CD8-positive, alpha-beta T cell (primary cell): ENCODE measurements at regions of chr1 and their contacts with region 1.

Region 1: GRCh38 chr1:86537928-86538695 is 8.8 kb upstream of the CLCA4 start:
- DNase-seq: no peak
- ATAC-seq: no peak
- H3K4me3 ChIP-seq: no peak overlapping the region
- H3K4me3 Mint-ChIP-seq: no peak overlapping the region
- H3K27ac ChIP-seq: no peak overlapping the region
- H3K27ac Mint-ChIP-seq: no peak overlapping the region
- H3K4me1 ChIP-seq: no peaks in the 10 kb centered on the region
- H3K4me1 Mint-ChIP-seq: no peaks in the 10 kb centered on the region
- H3K27me3 ChIP-seq: no peaks in the 10 kb centered on the region
- H3K27me3 Mint-ChIP-seq: peaks cover 28% of the 10 kb centered on the region
- CTCF ChIP-seq: no peak

Region 2: DNA sequence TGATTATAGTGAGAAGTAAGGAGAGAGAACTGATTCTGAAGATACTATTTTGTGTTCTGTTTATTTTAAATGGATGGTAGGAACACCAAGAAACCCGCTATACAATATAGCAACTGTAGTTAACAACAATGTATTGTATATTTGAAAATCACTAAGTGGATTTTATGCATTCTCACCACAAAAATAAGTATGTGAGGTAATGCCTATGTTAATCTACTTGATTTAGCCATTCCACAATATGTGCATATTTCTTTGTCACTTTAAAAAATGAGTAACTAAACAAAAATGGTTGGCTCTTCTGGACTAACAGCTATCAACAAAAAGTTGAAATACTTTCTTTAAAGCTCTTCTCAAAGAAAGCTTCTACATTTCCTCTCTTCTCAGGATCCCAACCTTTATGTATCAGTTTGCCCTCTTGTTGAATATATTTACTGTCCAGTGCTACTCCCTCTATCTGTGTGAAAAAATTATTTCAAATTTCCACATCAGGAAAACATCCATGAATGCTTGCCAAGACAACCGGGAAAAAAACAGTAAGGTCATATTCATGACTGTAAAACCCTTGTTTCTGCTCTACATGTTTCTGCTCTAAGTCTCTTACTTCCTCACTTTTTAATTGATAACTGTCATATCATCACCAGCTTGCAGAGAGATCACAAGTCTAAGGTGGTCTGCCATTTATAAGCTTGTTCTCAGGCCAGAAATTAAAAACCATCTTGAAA is 35.8 kb after region 1 on chr1:
- CTCF ChIA-PET with region 1: no interaction called
- POLR2A ChIA-PET with region 1: no interaction called
- intact Hi-C with region 1: no loop called
- DNase-seq: no peak
- ATAC-seq: no peak
- H3K4me3 ChIP-seq: no peak overlapping the region
- H3K4me3 Mint-ChIP-seq: no peak overlapping the region
- H3K27ac ChIP-seq: no peak overlapping the region
- H3K27ac Mint-ChIP-seq: no peak overlapping the region
- H3K4me1 ChIP-seq: no peaks in the 10 kb centered on the region
- H3K4me1 Mint-ChIP-seq: no peaks in the 10 kb centered on the region
- H3K27me3 ChIP-seq: peaks cover 0 to 4% of the 10 kb centered on the region in 2 experiments
- H3K27me3 Mint-ChIP-seq: peaks cover 7% of the 10 kb centered on the region
- CTCF ChIP-seq: no peak

Region 3: GRCh38 chr1:87370539-87370938 is 832.4 kb after region 1 on chr1:
- CTCF ChIA-PET with region 1: no interaction called
- POLR2A ChIA-PET with region 1: no interaction called
- intact Hi-C with region 1: loop called in 1 of 2 experiments (anchors 5 kb)
- DNase-seq: no peak
- ATAC-seq: no peak
- H3K4me3 ChIP-seq: no peak overlapping the region
- H3K4me3 Mint-ChIP-seq: no peak overlapping the region
- H3K27ac ChIP-seq: no peak overlapping the region
- H3K27ac Mint-ChIP-seq: no peak overlapping the region
- H3K4me1 ChIP-seq: no peaks in the 10 kb centered on the region
- H3K4me1 Mint-ChIP-seq: no peaks in the 10 kb centered on the region
- H3K27me3 ChIP-seq: no peaks in the 10 kb centered on the region
- H3K27me3 Mint-ChIP-seq: no peaks in the 10 kb centered on the region
- CTCF ChIP-seq: no peak